CD14-positive monocyte (primary cell): ENCODE measurements at regions of chr1 and their contacts with region 1.

Region 1: GRCh38 chr1:154558575-154559465 is at the start of gene UBE2Q1:
- DNase-seq: peak; percentile 96 to 100 (median 100)
- H3K4me3 ChIP-seq: peak within 1 kb of the TSS; percentile 64 to 97 (median 81)
- H3K4me3 Mint-ChIP-seq: peak within 1 kb of the TSS; percentile 86 to 96
- H3K27ac ChIP-seq: peak within 1 kb of the TSS; percentile 85 to 92
- H3K27ac Mint-ChIP-seq: peak within 1 kb of the TSS; percentile 88 to 99 (median 96)
- H3K4me1 ChIP-seq: peaks cover 26 to 27% of the 10 kb centered on the region in 2 donors
- H3K4me1 Mint-ChIP-seq: peaks cover 29% of the 10 kb centered on the region
- H3K27me3 ChIP-seq: no peaks in the 10 kb centered on the region
- H3K27me3 Mint-ChIP-seq: peaks cover 0 to 2% (median under 1%) of the 10 kb centered on the region in 3 donors
- CTCF ChIP-seq: no peak
- polyA plus RNA-seq, gene UBE2Q1: 6.4 to 22.6 (median 8.4) TPM

Region 2: GRCh38 chr1:154607609-154608396 is 49.0 kb after region 1 on chr1 and contains the start of gene ADAR:
- intact Hi-C with region 1: loop called in 1 of 2 experiments (anchors 5 kb)
- DNase-seq: peak; percentile 96 to 99 (median 97)
- H3K4me3 ChIP-seq: peak within 1 kb of the TSS; percentile 85 to 97 (median 95)
- H3K4me3 Mint-ChIP-seq: peak within 1 kb of the TSS; percentile 97 to 100
- H3K27ac ChIP-seq: peak within 1 kb of the TSS; percentile 83 to 99
- H3K27ac Mint-ChIP-seq: peak within 1 kb of the TSS; percentile 94 to 100 (median 99)
- H3K4me1 ChIP-seq: peaks cover 46 to 58% of the 10 kb centered on the region in 2 donors
- H3K4me1 Mint-ChIP-seq: peaks cover 76% of the 10 kb centered on the region
- H3K27me3 ChIP-seq: no peaks in the 10 kb centered on the region
- H3K27me3 Mint-ChIP-seq: no peaks in the 10 kb centered on the region
- CTCF ChIP-seq: no peak
- polyA plus RNA-seq, gene ADAR: 57.3 to 100 (median 91.6) TPM

Region 3: GRCh38 chr1:154870115-154870571 is 311.3 kb after region 1 on chr1 and contains the start of gene KCNN3:
- intact Hi-C with region 1: loop called in 1 of 2 experiments (anchors 5 kb)
- DNase-seq: peak; percentile 79 to 89 (median 86)
- H3K4me3 ChIP-seq: peak within 1 kb of the TSS in 1 of 3 experiments; percentile 60
- H3K4me3 Mint-ChIP-seq: peak within 1 kb of the TSS; percentile 69 to 88
- H3K27ac ChIP-seq: no peak within 1 kb of the TSS
- H3K27ac Mint-ChIP-seq: peak within 1 kb of the TSS in 1 of 7 donors; percentile 56
- H3K4me1 ChIP-seq: peaks cover 11 to 21% of the 10 kb centered on the region in 2 donors
- H3K4me1 Mint-ChIP-seq: peaks cover 20% of the 10 kb centered on the region
- H3K27me3 ChIP-seq: peaks cover 13 to 34% of the 10 kb centered on the region in 2 donors
- H3K27me3 Mint-ChIP-seq: peaks cover 43 to 49% (median 46%) of the 10 kb centered on the region in 3 donors
- CTCF ChIP-seq: no peak
- polyA plus RNA-seq, gene KCNN3: not detected

Region 4: GRCh38 chr1:154936555-154937084 is 377.8 kb after region 1 on chr1 and contains the start of gene PMVK:
- intact Hi-C with region 1: loop called in 1 of 2 experiments (anchors 10 kb)
- DNase-seq: peak; percentile 91 to 96 (median 95)
- H3K4me3 ChIP-seq: peak within 1 kb of the TSS; percentile 53 to 78 (median 76)
- H3K4me3 Mint-ChIP-seq: peak within 1 kb of the TSS; percentile 98 to 99
- H3K27ac ChIP-seq: peak within 1 kb of the TSS; percentile 97 to 100
- H3K27ac Mint-ChIP-seq: peak within 1 kb of the TSS; percentile 99 to 100 (median 99)
- H3K4me1 ChIP-seq: peaks cover 29 to 42% of the 10 kb centered on the region in 2 donors
- H3K4me1 Mint-ChIP-seq: peaks cover 56% of the 10 kb centered on the region
- H3K27me3 ChIP-seq: no peaks in the 10 kb centered on the region
- H3K27me3 Mint-ChIP-seq: peaks cover 0 to 2% (median 0%) of the 10 kb centered on the region in 3 donors
- CTCF ChIP-seq: no peak
- polyA plus RNA-seq, gene PMVK: 17.2 to 43.2 (median 41.9) TPM

Region 5: GRCh38 chr1:155135415-155136028 is 576.7 kb after region 1 on chr1 and contains the start of gene SLC50A1:
- intact Hi-C with region 1: loop called in 1 of 2 experiments (anchors 5 kb)
- DNase-seq: peak; percentile 94 to 96 (median 94)
- H3K4me3 ChIP-seq: peak within 1 kb of the TSS; percentile 75 to 84 (median 79)
- H3K4me3 Mint-ChIP-seq: peak within 1 kb of the TSS; percentile 97 to 99
- H3K27ac ChIP-seq: peak within 1 kb of the TSS; percentile 97 to 99
- H3K27ac Mint-ChIP-seq: peak within 1 kb of the TSS; percentile 99 to 100 (median 100)
- H3K4me1 ChIP-seq: peaks cover 31 to 46% of the 10 kb centered on the region in 2 donors
- H3K4me1 Mint-ChIP-seq: peaks cover 43% of the 10 kb centered on the region
- H3K27me3 ChIP-seq: peaks cover under 1 to 9% of the 10 kb centered on the region in 2 donors
- H3K27me3 Mint-ChIP-seq: peaks cover 6 to 17% (median 16%) of the 10 kb centered on the region in 3 donors
- CTCF ChIP-seq: no peak
- polyA plus RNA-seq, gene SLC50A1: 40.0 to 50.8 (median 49.4) TPM